PC-9 (cell line): ENCODE measurements at regions of chr9 and their contacts with region 1.

Region 1: DNA sequence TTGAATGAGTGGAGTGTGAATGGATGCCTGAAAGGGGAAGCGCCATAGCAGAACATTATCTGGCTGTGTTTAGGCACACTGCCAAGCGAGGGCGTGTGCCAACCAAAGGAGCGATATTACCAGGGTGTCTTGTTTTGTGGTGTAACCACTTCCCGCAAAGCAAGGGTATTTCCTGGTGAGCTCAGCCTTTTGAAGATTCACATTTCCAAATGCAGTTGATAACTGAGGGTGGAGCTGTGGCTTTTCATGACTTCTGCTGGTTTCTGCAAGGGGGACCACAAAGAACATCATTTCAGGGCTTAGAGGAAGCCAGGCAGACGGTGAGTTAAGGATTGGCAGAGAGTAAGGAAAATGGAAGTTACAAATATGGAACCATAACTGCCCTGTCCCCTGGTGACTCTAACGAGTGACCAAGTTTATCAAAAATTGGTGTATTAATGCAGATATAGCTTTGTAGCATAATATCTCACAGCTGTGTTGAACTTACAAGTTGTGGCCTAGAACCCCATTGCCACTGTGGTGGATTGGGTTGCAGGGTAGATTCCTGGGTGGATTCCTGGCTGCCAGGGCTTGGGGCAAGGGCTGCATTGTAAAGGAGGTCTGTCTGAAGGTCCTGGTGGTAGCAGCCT is 71.4 kb downstream of the RALGPS1 start:
- DNase-seq: peak; percentile 92 to 98
- H3K4me3 ChIP-seq: peak overlapping the region; percentile 10; the same call in 1 of the 2 replicates
- H3K27ac ChIP-seq: peak overlapping the region; percentile 87
- H3K4me1 ChIP-seq: peaks cover 48% of the 10 kb centered on the region
- H3K27me3 ChIP-seq: no peaks in the 10 kb centered on the region
- CTCF ChIP-seq: no peak; the same call in 1 of the 2 replicates

Region 2: DNA sequence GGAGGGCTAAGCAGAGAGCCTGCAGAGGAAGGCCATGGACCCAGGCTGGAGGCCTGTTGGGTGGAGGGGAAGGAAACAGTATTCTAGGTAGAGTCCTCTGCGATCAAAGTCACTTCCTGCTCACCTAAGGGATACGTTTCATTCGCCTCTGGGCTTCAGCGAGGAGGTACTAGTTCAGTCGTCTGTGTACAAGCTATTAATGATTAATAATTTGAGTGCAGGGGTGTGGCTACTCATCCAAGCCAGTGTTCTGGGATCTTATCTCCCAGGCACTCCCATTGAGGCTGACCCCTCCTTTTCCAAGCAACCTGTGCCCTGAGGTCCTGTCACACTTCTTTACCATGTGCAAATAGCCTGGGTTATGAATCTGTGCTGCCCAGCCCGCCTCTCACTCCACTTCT is 46.2 kb before region 1 on chr9:
- CTCF ChIA-PET with region 1: no interaction called
- POLR2A ChIA-PET with region 1: no interaction called
- intact Hi-C with region 1: loop called (anchors 5 kb)
- DNase-seq: no peak
- H3K4me3 ChIP-seq: no peak overlapping the region
- H3K27ac ChIP-seq: no peak overlapping the region
- H3K4me1 ChIP-seq: no peaks in the 10 kb centered on the region
- H3K27me3 ChIP-seq: no peaks in the 10 kb centered on the region
- CTCF ChIP-seq: no peak

Region 3: GRCh38 chr9:127049044-127049443 is 63.1 kb after region 1 on chr9:
- CTCF ChIA-PET with region 1: interaction called, 11 read pairs
- POLR2A ChIA-PET with region 1: no interaction called
- intact Hi-C with region 1: loop called (anchors 1 kb)
- DNase-seq: peak; percentile 70 to 95
- H3K4me3 ChIP-seq: peak overlapping the region; percentile 38; the same call in 1 of the 2 replicates
- H3K27ac ChIP-seq: peak overlapping the region; percentile 86
- H3K4me1 ChIP-seq: peaks cover 35% of the 10 kb centered on the region
- H3K27me3 ChIP-seq: no peaks in the 10 kb centered on the region
- CTCF ChIP-seq: 0 out of 2 replicates have a peak, but pooled peaks have one; percentile 34

Region 4: GRCh38 chr9:127112056-127112455 is 126.1 kb after region 1 on chr9:
- CTCF ChIA-PET with region 1: no interaction called
- POLR2A ChIA-PET with region 1: interaction called, 3 read pairs
- intact Hi-C with region 1: loop called (anchors 1 kb)
- DNase-seq: peak; percentile 56 to 85
- H3K4me3 ChIP-seq: no peak overlapping the region
- H3K27ac ChIP-seq: no peak overlapping the region
- H3K4me1 ChIP-seq: peaks cover 46% of the 10 kb centered on the region
- H3K27me3 ChIP-seq: no peaks in the 10 kb centered on the region
- CTCF ChIP-seq: no peak

Region 5: DNA sequence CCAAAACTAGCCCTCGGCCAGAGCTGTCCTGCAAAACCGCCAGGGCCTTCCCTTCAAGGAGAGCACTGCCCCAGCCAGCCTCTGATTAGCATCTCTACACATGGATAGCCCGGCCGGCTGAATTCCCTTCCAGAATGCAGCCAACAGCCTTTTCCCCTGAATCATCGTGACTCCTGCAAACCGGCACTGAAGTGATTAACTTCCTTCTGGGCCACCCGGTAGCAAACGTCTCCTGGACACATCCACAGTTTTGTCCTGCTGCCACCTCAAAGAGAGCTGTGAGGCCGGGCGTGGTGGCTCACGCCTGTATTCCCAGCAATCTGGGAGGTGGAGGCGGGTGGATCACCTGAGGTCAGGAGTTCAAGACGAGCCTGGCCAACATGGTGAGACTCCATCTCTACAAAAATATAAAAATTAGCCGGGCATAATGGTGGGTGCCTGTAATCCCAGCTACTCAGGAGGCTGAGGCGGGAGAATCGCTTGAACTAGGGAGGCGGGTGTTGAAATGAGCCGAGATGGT is 1015.9 kb after region 1 on chr9:
- CTCF ChIA-PET with region 1: no interaction called
- POLR2A ChIA-PET with region 1: interaction called, 10 read pairs
- intact Hi-C with region 1: no loop called
- DNase-seq: peak; percentile 95 to 97
- H3K4me3 ChIP-seq: peak overlapping the region; percentile 33; the same call in 1 of the 2 replicates
- H3K27ac ChIP-seq: peak overlapping the region; percentile 99
- H3K4me1 ChIP-seq: peaks cover 67% of the 10 kb centered on the region
- H3K27me3 ChIP-seq: no peaks in the 10 kb centered on the region
- CTCF ChIP-seq: no peak